Naive thymus-derived CD4-positive, alpha-beta T cell (primary cell): ENCODE measurements at regions of chr7 and their contacts with region 1.

Region 1: DNA sequence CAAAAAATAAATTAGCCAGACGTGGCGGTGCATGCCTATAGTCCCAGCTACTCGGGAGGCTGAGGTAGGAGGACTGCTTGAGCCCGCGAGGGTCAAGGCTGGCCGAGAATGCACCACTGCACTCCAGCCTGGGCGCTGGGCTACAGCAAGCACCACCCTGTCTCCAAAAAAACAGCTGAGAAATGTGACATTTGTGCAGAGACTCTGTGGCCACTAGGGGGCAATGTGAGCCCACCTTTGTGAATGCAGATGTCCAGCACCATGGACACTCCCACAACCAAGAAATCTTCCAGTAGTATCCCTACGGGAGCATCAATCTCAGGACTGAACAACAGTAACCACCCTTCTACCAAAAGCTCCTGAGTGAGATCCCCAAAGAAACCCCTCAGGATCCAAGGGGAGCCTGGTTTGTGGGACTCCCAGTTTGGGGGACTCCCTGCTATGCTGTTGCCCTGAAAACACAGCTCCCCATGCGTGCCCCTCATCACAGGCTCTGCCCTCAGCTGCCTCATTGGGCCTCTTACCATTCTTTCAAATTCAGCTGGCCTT is 6.2 kb upstream of the AHCYL2 start:
- DNase-seq: peak; percentile 58 to 80 (median 73)
- ATAC-seq: peak; percentile 93
- H3K4me3 ChIP-seq: no peak overlapping the region
- H3K4me3 Mint-ChIP-seq: peak overlapping the region in 1 of 10 donors; percentile 32
- H3K27ac ChIP-seq: no peak overlapping the region
- H3K27ac Mint-ChIP-seq: peak overlapping the region in 3 of 9 donors; percentile 51 to 87 (median 52)
- H3K4me1 ChIP-seq: peaks cover 0 to 3% of the 10 kb centered on the region in 2 donors
- H3K4me1 Mint-ChIP-seq: peaks cover 11 to 20% (median 16%) of the 10 kb centered on the region in 7 donors
- H3K27me3 ChIP-seq: no peaks in the 10 kb centered on the region
- H3K27me3 Mint-ChIP-seq: peaks cover 0 to 8% (median 0%) of the 10 kb centered on the region in 5 donors

Region 2: DNA sequence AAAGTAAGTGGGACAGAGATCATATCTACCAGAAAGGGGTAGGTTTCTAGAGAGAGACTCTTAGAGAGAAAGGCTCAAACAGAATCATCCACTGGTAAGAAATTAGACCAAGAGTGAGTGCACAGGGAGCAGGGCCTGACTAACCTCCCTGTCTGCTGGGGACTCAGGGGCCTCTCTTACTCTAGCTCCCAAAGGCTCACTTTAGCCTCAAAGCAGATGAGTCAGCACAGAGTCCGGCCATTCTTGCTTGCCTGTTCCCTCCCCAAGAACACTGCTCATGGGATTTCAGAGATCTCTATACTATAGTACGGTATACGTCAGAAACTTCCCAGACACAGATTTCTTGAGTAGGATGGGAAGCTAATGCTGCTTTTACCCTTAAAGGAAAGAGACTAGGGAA is 907.6 kb before region 1 on chr7:
- CTCF ChIA-PET with region 1: no interaction called
- POLR2A ChIA-PET with region 1: no interaction called
- intact Hi-C with region 1: no loop called
- DNase-seq: no peak
- ATAC-seq: no peak
- H3K4me3 ChIP-seq: no peak overlapping the region
- H3K4me3 Mint-ChIP-seq: no peak overlapping the region
- H3K27ac ChIP-seq: no peak overlapping the region
- H3K27ac Mint-ChIP-seq: no peak overlapping the region
- H3K4me1 ChIP-seq: no peaks in the 10 kb centered on the region
- H3K4me1 Mint-ChIP-seq: peaks cover 0 to 6% (median 0%) of the 10 kb centered on the region in 7 donors
- H3K27me3 ChIP-seq: no peaks in the 10 kb centered on the region
- H3K27me3 Mint-ChIP-seq: no peaks in the 10 kb centered on the region

Region 3: GRCh38 chr7:128710481-128710880 is 508.1 kb before region 1 on chr7:
- CTCF ChIA-PET with region 1: no interaction called
- POLR2A ChIA-PET with region 1: no interaction called
- intact Hi-C with region 1: no loop called
- DNase-seq: no peak
- ATAC-seq: no peak
- H3K4me3 ChIP-seq: no peak overlapping the region
- H3K4me3 Mint-ChIP-seq: no peak overlapping the region
- H3K27ac ChIP-seq: no peak overlapping the region
- H3K27ac Mint-ChIP-seq: no peak overlapping the region
- H3K4me1 ChIP-seq: no peaks in the 10 kb centered on the region
- H3K4me1 Mint-ChIP-seq: no peaks in the 10 kb centered on the region
- H3K27me3 ChIP-seq: no peaks in the 10 kb centered on the region
- H3K27me3 Mint-ChIP-seq: peaks cover 0 to 17% (median 13%) of the 10 kb centered on the region in 5 donors

Region 4: GRCh38 chr7:129231666-129232065 is 13.1 kb after region 1 on chr7:
- CTCF ChIA-PET with region 1: interaction called, 19 read pairs
- POLR2A ChIA-PET with region 1: interaction called, 3 read pairs
- intact Hi-C with region 1: no loop called
- DNase-seq: no peak
- ATAC-seq: no peak
- H3K4me3 ChIP-seq: no peak overlapping the region
- H3K4me3 Mint-ChIP-seq: no peak overlapping the region
- H3K27ac ChIP-seq: no peak overlapping the region
- H3K27ac Mint-ChIP-seq: peak overlapping the region in 1 of 9 donors; percentile 62
- H3K4me1 ChIP-seq: peaks cover under 1 to 6% of the 10 kb centered on the region in 2 donors
- H3K4me1 Mint-ChIP-seq: peaks cover 2 to 68% (median 51%) of the 10 kb centered on the region in 7 donors
- H3K27me3 ChIP-seq: no peaks in the 10 kb centered on the region
- H3K27me3 Mint-ChIP-seq: no peaks in the 10 kb centered on the region

Region 5: DNA sequence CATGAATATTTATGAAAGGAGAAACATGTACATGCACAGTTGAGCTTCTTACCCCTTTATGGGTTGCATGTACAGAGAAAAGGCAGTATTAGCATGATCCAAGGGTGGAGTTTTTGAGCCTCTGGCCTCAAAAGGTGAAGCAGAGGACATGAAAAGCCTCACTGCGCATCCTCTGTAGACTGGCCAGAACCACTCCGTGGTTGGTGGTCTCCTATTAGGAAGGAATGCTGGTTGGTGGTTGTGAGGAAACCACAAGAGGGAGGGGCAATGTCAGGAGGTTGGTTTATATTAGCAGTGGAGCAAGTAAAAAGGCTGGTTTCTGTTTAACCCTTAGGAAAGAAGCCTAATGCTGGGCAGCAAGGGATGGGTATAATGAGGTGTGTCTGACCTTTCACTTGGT is 43.7 kb after region 1 on chr7:
- CTCF ChIA-PET with region 1: interaction called, 159 read pairs
- POLR2A ChIA-PET with region 1: interaction called, 4 read pairs
- intact Hi-C with region 1: no loop called
- DNase-seq: no peak
- ATAC-seq: no peak
- H3K4me3 ChIP-seq: no peak overlapping the region
- H3K4me3 Mint-ChIP-seq: peak overlapping the region in 3 of 10 donors; percentile 6 to 34 (median 25)
- H3K27ac ChIP-seq: no peak overlapping the region
- H3K27ac Mint-ChIP-seq: peak overlapping the region in 1 of 9 donors; percentile 43
- H3K4me1 ChIP-seq: peaks cover 10 to 12% of the 10 kb centered on the region in 2 donors
- H3K4me1 Mint-ChIP-seq: peaks cover 21 to 50% (median 38%) of the 10 kb centered on the region in 7 donors
- H3K27me3 ChIP-seq: no peaks in the 10 kb centered on the region
- H3K27me3 Mint-ChIP-seq: peaks cover 0 to under 1% (median 0%) of the 10 kb centered on the region in 5 donors

Region 6: GRCh38 chr7:129271500-129272355 is 53.1 kb after region 1 on chr7:
- CTCF ChIA-PET with region 1: interaction called, 159 read pairs
- POLR2A ChIA-PET with region 1: interaction called, 8 read pairs
- intact Hi-C with region 1: loop called (anchors 1 kb)
- DNase-seq: peak; percentile 18 to 80 (median 74)
- ATAC-seq: peak; percentile 98
- H3K4me3 ChIP-seq: no peak overlapping the region
- H3K4me3 Mint-ChIP-seq: peak overlapping the region in 8 of 10 donors; percentile 25 to 75 (median 60)
- H3K27ac ChIP-seq: no peak overlapping the region
- H3K27ac Mint-ChIP-seq: peak overlapping the region in 3 of 9 donors; percentile 50 to 86 (median 73)
- H3K4me1 ChIP-seq: no peaks in the 10 kb centered on the region
- H3K4me1 Mint-ChIP-seq: peaks cover 7 to 20% (median 11%) of the 10 kb centered on the region in 7 donors
- H3K27me3 ChIP-seq: no peaks in the 10 kb centered on the region
- H3K27me3 Mint-ChIP-seq: no peaks in the 10 kb centered on the region

Region 7: GRCh38 chr7:129298268-129298893 is 79.8 kb after region 1 on chr7:
- CTCF ChIA-PET with region 1: interaction called, 71 read pairs
- POLR2A ChIA-PET with region 1: no interaction called
- intact Hi-C with region 1: loop called (anchors 1 kb)
- DNase-seq: peak in 7 of 9 donors; percentile 15 to 53 (median 37)
- ATAC-seq: no peak
- H3K4me3 ChIP-seq: no peak overlapping the region
- H3K4me3 Mint-ChIP-seq: no peak overlapping the region
- H3K27ac ChIP-seq: no peak overlapping the region
- H3K27ac Mint-ChIP-seq: no peak overlapping the region
- H3K4me1 ChIP-seq: no peaks in the 10 kb centered on the region
- H3K4me1 Mint-ChIP-seq: peaks cover 0 to 14% (median 8%) of the 10 kb centered on the region in 7 donors
- H3K27me3 ChIP-seq: no peaks in the 10 kb centered on the region
- H3K27me3 Mint-ChIP-seq: peaks cover 0 to 5% (median 0%) of the 10 kb centered on the region in 5 donors

Region 8: DNA sequence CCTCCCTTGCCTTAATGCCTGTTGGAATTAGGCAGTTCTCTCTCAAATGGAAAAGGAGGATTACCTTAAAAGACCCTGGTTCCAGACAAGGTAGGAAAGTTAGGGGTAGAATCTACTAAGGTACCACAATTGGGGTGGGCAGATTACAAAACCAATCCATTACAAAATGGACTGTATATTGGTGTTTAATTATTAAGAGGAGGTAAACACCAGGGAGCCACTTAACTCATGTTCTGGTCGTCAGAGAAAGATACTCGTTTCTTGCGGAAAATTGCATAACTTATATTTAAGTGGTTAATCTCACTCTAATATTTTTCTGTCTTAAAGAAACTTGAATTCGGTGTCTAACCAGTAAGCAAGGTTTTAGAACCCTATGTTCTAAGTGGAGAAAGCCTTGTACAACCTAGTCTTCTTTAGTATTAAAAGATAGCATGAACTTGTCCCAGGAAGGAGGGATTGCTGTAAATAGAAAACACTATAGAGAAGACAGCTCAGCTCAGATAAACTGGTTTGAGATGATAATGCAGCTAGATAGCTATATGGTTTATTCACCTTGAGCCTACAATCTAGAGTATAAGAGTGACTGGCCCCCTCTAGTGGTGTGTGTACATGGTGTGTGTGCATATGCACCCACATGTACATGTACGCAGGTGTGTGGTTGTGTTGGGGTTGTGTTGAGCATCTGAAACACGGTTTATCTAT is 157.6 kb after region 1 on chr7:
- CTCF ChIA-PET with region 1: interaction called, 11 read pairs
- POLR2A ChIA-PET with region 1: no interaction called
- intact Hi-C with region 1: loop called (anchors 1 to 10 kb)
- DNase-seq: peak in 8 of 9 donors; percentile 8 to 39 (median 26)
- ATAC-seq: peak; percentile 73
- H3K4me3 ChIP-seq: no peak overlapping the region
- H3K4me3 Mint-ChIP-seq: no peak overlapping the region
- H3K27ac ChIP-seq: no peak overlapping the region
- H3K27ac Mint-ChIP-seq: peak overlapping the region in 1 of 9 donors; percentile 57
- H3K4me1 ChIP-seq: peaks cover 0 to 3% of the 10 kb centered on the region in 2 donors
- H3K4me1 Mint-ChIP-seq: peaks cover 0 to 39% (median 0%) of the 10 kb centered on the region in 7 donors
- H3K27me3 ChIP-seq: no peaks in the 10 kb centered on the region
- H3K27me3 Mint-ChIP-seq: no peaks in the 10 kb centered on the region

Region 9: DNA sequence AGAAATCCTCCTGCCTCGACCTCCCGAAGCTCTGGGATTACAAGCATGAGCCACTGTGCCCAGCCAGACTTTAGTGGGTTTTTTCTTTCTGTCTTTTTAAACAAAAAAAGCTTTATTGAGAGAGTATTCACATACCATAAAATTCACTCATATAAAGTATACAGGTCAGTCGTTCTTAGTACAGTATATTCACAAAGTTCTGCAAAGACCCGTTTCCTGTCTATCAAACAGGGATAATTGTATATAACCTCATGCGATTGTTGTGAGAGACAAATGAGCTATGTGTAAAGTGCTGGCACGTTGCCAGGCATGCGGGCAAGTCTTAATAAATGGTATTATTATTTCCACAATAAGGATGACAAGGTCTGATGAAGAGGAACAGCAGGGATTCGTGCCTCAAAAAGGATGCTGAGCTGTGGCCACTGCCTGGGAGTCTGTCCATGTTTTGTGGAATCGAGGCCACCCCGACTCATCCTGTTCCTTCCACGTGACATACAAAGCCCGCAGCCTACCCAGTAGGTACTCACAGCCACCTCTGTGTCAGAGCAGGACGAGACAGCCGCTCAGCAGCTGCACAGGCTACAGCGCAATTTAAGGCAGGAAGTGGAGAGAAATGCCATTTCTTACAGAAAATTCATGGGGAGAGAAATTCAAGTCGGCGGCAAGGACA is 335.4 kb after region 1 on chr7:
- CTCF ChIA-PET with region 1: no interaction called
- POLR2A ChIA-PET with region 1: no interaction called
- intact Hi-C with region 1: no loop called
- DNase-seq: peak in 7 of 9 donors; percentile 16 to 48 (median 29)
- ATAC-seq: peak; percentile 84
- H3K4me3 ChIP-seq: no peak overlapping the region
- H3K4me3 Mint-ChIP-seq: peak overlapping the region in 9 of 10 donors; percentile 15 to 79 (median 38)
- H3K27ac ChIP-seq: no peak overlapping the region
- H3K27ac Mint-ChIP-seq: peak overlapping the region in 2 of 9 donors; percentile 12 to 70
- H3K4me1 ChIP-seq: no peaks in the 10 kb centered on the region
- H3K4me1 Mint-ChIP-seq: peaks cover 0 to 8% (median 7%) of the 10 kb centered on the region in 7 donors
- H3K27me3 ChIP-seq: no peaks in the 10 kb centered on the region
- H3K27me3 Mint-ChIP-seq: peaks cover 0 to 8% (median 0%) of the 10 kb centered on the region in 5 donors